GM10248 (cell line): ENCODE measurements at regions of chr6 and their contacts with region 1.

Region 1: GRCh38 chr6:158649289-158650143 is at the start of gene SYTL3:
- DNase-seq: peak; percentile 53
- CTCF ChIP-seq: no peak

Region 2: GRCh38 chr6:158009114-158009891 is 640.2 kb before region 1 on chr6:
- CTCF ChIA-PET with region 1: no interaction called
- POLR2A ChIA-PET with region 1: no interaction called
- DNase-seq: no peak
- CTCF ChIP-seq: no peak

Region 3: DNA sequence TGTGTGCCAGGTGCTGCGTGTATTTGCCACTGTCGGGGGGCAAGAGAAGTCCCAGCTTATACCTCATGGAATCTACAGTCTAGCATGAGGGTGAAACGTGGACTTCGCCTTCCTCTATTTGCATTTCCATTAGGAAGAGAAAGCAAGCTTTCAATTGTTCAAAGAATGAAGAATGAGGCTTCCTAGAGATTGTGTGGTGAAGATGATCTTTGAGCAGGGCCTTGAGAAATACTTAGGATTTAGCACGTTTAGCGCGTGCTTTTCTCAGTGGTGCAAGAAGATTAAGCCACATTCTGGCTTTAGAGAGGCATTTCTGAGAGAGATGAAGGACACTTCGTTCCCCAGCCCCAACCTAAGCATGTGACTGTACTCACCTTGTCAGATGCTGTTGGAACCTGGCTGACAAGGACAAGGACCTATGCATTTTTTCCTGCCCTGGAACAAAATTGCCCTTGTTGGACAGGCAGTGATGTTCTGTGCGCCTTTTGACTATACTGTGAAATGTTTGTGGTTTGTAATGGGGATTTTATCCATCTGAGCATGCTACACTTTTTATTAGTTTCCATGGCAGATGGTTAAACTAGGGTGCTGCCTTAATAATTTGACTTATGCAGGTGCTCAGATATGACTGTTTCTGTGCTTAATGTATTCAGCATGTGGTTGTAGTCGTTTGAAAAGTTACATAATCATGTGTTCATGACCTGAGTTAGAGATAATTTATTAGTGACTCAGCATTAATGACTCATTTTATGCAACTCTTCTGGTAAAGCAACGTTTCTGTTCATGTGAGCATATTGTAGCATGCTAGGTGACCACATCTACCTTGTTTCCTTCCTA is 326.6 kb before region 1 on chr6:
- CTCF ChIA-PET with region 1: no interaction called
- POLR2A ChIA-PET with region 1: interaction called, 11 read pairs
- DNase-seq: peak; percentile 41
- CTCF ChIP-seq: no peak

Region 4: DNA sequence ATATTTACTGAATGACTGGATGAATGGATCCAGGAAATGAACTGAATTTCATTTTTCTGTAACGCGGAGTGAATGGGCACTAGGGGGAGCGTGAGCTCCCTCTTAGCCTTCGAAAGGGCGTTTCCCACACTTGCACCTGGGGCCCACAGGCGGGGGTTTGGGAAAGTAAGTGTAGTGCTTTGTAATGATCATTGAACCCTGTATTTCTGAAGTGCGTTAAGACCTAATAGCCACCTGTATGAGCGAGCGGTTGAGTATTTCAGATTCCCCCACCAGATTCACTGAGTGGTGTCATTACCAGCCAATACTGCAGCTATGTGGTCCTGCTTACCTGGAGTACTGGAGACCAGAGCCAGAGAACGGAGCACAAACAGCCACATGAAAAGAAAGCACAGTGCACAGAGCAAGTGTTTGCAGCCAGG is 10.8 kb after region 1 on chr6:
- CTCF ChIA-PET with region 1: interaction called, 42 read pairs
- POLR2A ChIA-PET with region 1: interaction called, 4 read pairs
- DNase-seq: peak; percentile 65
- CTCF ChIP-seq: peak; percentile 58